Activated T-helper 2 cell treated with anti-CD3 and anti-CD28 coated beads, Interferon-gamma antibody, Interleukin-2, Interleukin-4, amounts not matched to agents 10 μg/mL and 5 μg/mL and 100 μg/mL, durations not matched to agents 14 hours and 24 hours and 36 hours (primary cell): ENCODE measurements at regions of chr7 and their contacts with region 1.

Region 1: DNA sequence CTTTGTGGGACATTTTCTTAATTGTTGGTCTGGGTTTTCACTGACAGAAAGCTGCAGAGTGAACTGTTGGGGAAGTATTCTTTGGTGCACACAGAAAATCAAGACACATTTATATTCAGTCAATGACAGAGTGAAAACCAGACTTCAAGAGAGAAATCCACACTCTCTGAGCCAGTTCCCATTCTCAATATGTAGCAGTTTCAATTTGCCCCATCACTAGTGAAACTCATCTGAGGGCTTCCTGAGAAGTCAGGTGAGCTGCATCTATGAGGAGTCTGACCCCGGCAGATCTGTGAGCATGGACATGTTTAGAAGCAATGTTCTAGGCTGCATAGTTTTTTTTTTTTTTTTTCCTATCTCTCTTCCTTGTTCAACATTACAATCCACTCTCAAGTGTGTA is 163.7 kb upstream of the AHR start:
- DNase-seq: no peak
- H3K4me3 Mint-ChIP-seq: no peak overlapping the region
- H3K27ac Mint-ChIP-seq: peak overlapping the region; percentile 77
- H3K4me1 Mint-ChIP-seq: peaks cover 70% of the 10 kb centered on the region
- H3K27me3 Mint-ChIP-seq: no peaks in the 10 kb centered on the region

Region 2: DNA sequence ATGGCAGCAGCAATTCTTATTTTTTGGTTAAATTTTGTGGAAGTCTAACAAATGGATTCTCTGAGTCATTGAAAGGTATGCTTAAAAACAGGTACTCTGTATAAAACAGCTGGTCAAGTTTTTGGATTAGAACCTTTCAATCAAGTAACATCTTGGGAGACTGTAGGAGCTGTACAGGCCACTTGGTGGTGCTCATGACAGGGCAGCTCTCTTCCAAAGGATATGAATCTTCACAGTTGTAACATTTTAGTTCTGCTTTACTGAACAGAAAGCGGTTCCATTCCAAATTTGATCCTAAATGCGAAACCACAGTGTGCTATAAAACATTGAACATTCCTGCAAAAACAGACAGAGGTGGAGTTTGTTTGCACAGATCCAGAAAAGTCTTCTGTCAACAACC is 208.5 kb before region 1 on chr7:
- intact Hi-C with region 1: loop called (anchors 2 kb)
- DNase-seq: no peak
- H3K4me3 Mint-ChIP-seq: no peak overlapping the region
- H3K27ac Mint-ChIP-seq: peak overlapping the region; percentile 43
- H3K4me1 Mint-ChIP-seq: peaks cover 62% of the 10 kb centered on the region
- H3K27me3 Mint-ChIP-seq: no peaks in the 10 kb centered on the region

Region 3: DNA sequence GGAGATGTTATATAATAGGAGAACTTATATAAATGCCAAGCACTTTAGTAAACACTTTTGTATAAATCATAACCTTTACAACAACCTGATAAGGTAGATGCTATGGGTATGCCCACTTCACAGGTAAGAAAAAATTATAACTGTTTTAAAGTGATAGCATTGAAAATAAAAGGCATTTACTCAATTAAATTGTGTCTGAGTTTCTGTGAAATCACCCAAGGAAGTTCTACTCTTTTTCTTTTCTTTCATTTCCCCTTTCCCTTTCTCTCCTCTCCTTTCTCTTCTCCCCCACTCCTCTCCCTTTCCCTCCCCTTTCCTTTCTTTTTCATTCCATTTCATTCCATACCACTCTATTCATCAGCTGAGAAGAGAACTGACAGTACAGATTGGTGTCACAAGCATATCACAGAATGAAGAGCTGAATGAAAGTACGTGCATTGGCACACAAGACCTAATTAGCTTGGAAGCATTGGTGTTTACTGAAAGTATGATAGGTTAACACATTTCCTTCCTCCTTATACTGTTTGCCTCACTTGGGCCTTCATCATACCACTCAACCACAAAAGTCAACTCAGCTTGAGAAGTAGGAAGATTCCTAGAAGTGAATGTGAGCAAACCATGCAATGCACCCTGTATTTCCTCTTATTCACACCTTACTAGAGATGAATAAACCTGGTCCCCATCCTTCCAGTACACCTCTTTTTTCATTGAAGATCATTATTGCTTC is 135.1 kb before region 1 on chr7:
- intact Hi-C with region 1: loop called (anchors 1 kb)
- DNase-seq: peak; percentile 15
- H3K4me3 Mint-ChIP-seq: peak overlapping the region; percentile 53
- H3K27ac Mint-ChIP-seq: peak overlapping the region; percentile 77
- H3K4me1 Mint-ChIP-seq: peaks cover 33% of the 10 kb centered on the region
- H3K27me3 Mint-ChIP-seq: peaks cover 2% of the 10 kb centered on the region

Region 4: GRCh38 chr7:17041324-17041723 is 93.5 kb before region 1 on chr7:
- intact Hi-C with region 1: loop called (anchors 5 kb)
- DNase-seq: no peak
- H3K4me3 Mint-ChIP-seq: peak overlapping the region; percentile 13
- H3K27ac Mint-ChIP-seq: peak overlapping the region; percentile 57
- H3K4me1 Mint-ChIP-seq: peaks cover 53% of the 10 kb centered on the region
- H3K27me3 Mint-ChIP-seq: peaks cover 2% of the 10 kb centered on the region

Region 5: GRCh38 chr7:17159500-17160037 is 24.8 kb after region 1 on chr7:
- intact Hi-C with region 1: loop called (anchors 1 kb)
- DNase-seq: no peak
- H3K4me3 Mint-ChIP-seq: no peak overlapping the region
- H3K27ac Mint-ChIP-seq: peak overlapping the region; percentile 36
- H3K4me1 Mint-ChIP-seq: peaks cover 50% of the 10 kb centered on the region
- H3K27me3 Mint-ChIP-seq: no peaks in the 10 kb centered on the region